K562 (cell line): ENCODE measurements at regions of chrX and their contacts with region 1.

Region 1: GRCh38 chrX:65997978-65998717 is 41.7 kb downstream of the VSIG4 start:
- DNase-seq: peak; percentile 81 to 94 (median 84)
- ATAC-seq: peak; percentile 80
- H3K4me3 ChIP-seq: no peak overlapping the region
- H3K27ac ChIP-seq: peak overlapping the region; percentile 99
- H3K4me1 ChIP-seq: peaks cover 5 to 78% of the 10 kb centered on the region in 2 experiments; a peak in 4 of 5 replicates
- H3K27me3 ChIP-seq: no peaks in the 10 kb centered on the region
- CTCF ChIP-seq: no peak
- EP300 ChIP-seq: peak; percentile 100
- POLR2A ChIP-seq: peak; percentile 78
- RAD21 ChIP-seq: peak; percentile 10 to 42; a peak in 2 of 4 replicates

Region 2: GRCh38 chrX:66015152-66015831 is 17.1 kb after region 1 on chrX:
- CTCF ChIA-PET with region 1: no interaction called
- POLR2A ChIA-PET with region 1: interaction called, 49 read pairs
- in situ Hi-C with region 1: no loop called
- intact Hi-C with region 1: loop called (anchors 1 kb)
- DNase-seq: peak; percentile 35 to 88 (median 60)
- ATAC-seq: peak; percentile 68
- H3K4me3 ChIP-seq: peak overlapping the region; percentile 55
- H3K27ac ChIP-seq: peak overlapping the region; percentile 96
- H3K4me1 ChIP-seq: peaks cover 16 to 72% of the 10 kb centered on the region in 2 experiments
- H3K27me3 ChIP-seq: no peaks in the 10 kb centered on the region
- CTCF ChIP-seq: no peak
- EP300 ChIP-seq: peak; percentile 96
- POLR2A ChIP-seq: peak; percentile 88
- RAD21 ChIP-seq: peak in 1 of 2 experiments; percentile 32; a peak in 2 of 4 replicates

Region 3: GRCh38 chrX:66203114-66203513 is 205.0 kb after region 1 on chrX:
- CTCF ChIA-PET with region 1: no interaction called
- POLR2A ChIA-PET with region 1: no interaction called
- in situ Hi-C with region 1: no loop called
- intact Hi-C with region 1: no loop called
- DNase-seq: no peak
- ATAC-seq: no peak
- H3K4me3 ChIP-seq: no peak overlapping the region
- H3K27ac ChIP-seq: no peak overlapping the region
- H3K4me1 ChIP-seq: no peaks in the 10 kb centered on the region
- H3K27me3 ChIP-seq: no peaks in the 10 kb centered on the region
- CTCF ChIP-seq: no peak
- EP300 ChIP-seq: no peak
- POLR2A ChIP-seq: no peak
- RAD21 ChIP-seq: no peak